Right lobe of liver (tissue), 6 donors: ENCODE measurements at regions of chr4 and their contacts with region 1.

Region 1: GRCh38 chr4:170030121-170030520 is 3.9 kb upstream of the MFAP3L start:
- DNase-seq: no peak
- ATAC-seq: no peak
- H3K4me3 ChIP-seq: no peak overlapping the region
- H3K27ac ChIP-seq: no peak overlapping the region
- H3K4me1 ChIP-seq: peaks cover 0 to 5% (median 1%) of the 10 kb centered on the region in 4 donors
- H3K27me3 ChIP-seq: no peaks in the 10 kb centered on the region
- CTCF ChIP-seq: no peak
- POLR2A ChIP-seq: no peak

Region 2: GRCh38 chr4:169902658-169903345 is 127.3 kb before region 1 on chr4:
- intact Hi-C with region 1: loop called in 1 of 2 experiments (anchors 10 kb)
- DNase-seq: peak; percentile 36 to 88 (median 52)
- ATAC-seq: peak; percentile 85 to 94 (median 86)
- H3K4me3 ChIP-seq: peak overlapping the region in 1 of 3 donors; percentile 35
- H3K27ac ChIP-seq: peak overlapping the region in 2 of 3 donors; percentile 1 to 69
- H3K4me1 ChIP-seq: peaks cover 0 to 27% (median 11%) of the 10 kb centered on the region in 4 donors
- H3K27me3 ChIP-seq: no peaks in the 10 kb centered on the region
- CTCF ChIP-seq: peak; percentile 38 to 57 (median 52)
- POLR2A ChIP-seq: no peak